ENCODE measurements at regions of chr3 and their contacts with region 1.

Region 1: GRCh38 chr3:180912304-180913296 is at the start of gene FXR1:
- DNase-seq: peak; percentile 80 to 91 (median 89)
- ATAC-seq: peak; percentile 95
- H3K4me3 ChIP-seq: peak within 1 kb of the TSS; percentile 80
- H3K4me3 Mint-ChIP-seq: peak within 1 kb of the TSS; percentile 91 to 98 (median 96)
- H3K27ac ChIP-seq: peak within 1 kb of the TSS; percentile 97
- H3K27ac Mint-ChIP-seq: peak within 1 kb of the TSS; percentile 94 to 100 (median 97)
- H3K4me1 ChIP-seq: peaks cover 17 to 25% of the 10 kb centered on the region in 2 donors
- H3K4me1 Mint-ChIP-seq: peaks cover 35 to 76% (median 67%) of the 10 kb centered on the region in 7 donors
- H3K27me3 ChIP-seq: no peaks in the 10 kb centered on the region
- H3K27me3 Mint-ChIP-seq: no peaks in the 10 kb centered on the region
- total RNA-seq, gene FXR1: 108 to 151 (median 129) TPM

Region 2: GRCh38 chr3:179071550-179072397 is 1840.8 kb before region 1 on chr3 and contains the start of gene ZMAT3:
- CTCF ChIA-PET with region 1: no interaction called
- POLR2A ChIA-PET with region 1: no interaction called
- intact Hi-C with region 1: loop called in 1 of 2 experiments (anchors 5 kb)
- DNase-seq: peak; percentile 72 to 88 (median 83)
- ATAC-seq: peak; percentile 88
- H3K4me3 ChIP-seq: peak within 1 kb of the TSS; percentile 74
- H3K4me3 Mint-ChIP-seq: peak within 1 kb of the TSS; percentile 97 to 100 (median 98)
- H3K27ac ChIP-seq: peak within 1 kb of the TSS; percentile 87
- H3K27ac Mint-ChIP-seq: peak within 1 kb of the TSS; percentile 89 to 98 (median 95)
- H3K4me1 ChIP-seq: peaks cover 13 to 18% of the 10 kb centered on the region in 2 donors
- H3K4me1 Mint-ChIP-seq: peaks cover 24 to 81% (median 59%) of the 10 kb centered on the region in 7 donors
- H3K27me3 ChIP-seq: no peaks in the 10 kb centered on the region
- H3K27me3 Mint-ChIP-seq: no peaks in the 10 kb centered on the region
- total RNA-seq, gene ZMAT3: 20.6 to 23.7 (median 21.7) TPM

Region 3: GRCh38 chr3:179604321-179605078 is 1308.1 kb before region 1 on chr3 and contains the starts of genes MRPL47 and NDUFB5:
- CTCF ChIA-PET with region 1: no interaction called
- POLR2A ChIA-PET with region 1: no interaction called
- intact Hi-C with region 1: loop called (anchors 1 kb)
- DNase-seq: peak; percentile 76 to 95 (median 92)
- ATAC-seq: peak; percentile 100
- H3K4me3 ChIP-seq: peak within 1 kb of the TSS; percentile 95
- H3K4me3 Mint-ChIP-seq: peak within 1 kb of the TSS; percentile 95 to 99 (median 99)
- H3K27ac ChIP-seq: peak within 1 kb of the TSS; percentile 90
- H3K27ac Mint-ChIP-seq: peak within 1 kb of the TSS; percentile 98 to 100 (median 99)
- H3K4me1 ChIP-seq: peaks cover 15 to 25% of the 10 kb centered on the region in 2 donors
- H3K4me1 Mint-ChIP-seq: peaks cover 23 to 65% (median 46%) of the 10 kb centered on the region in 7 donors
- H3K27me3 ChIP-seq: no peaks in the 10 kb centered on the region
- H3K27me3 Mint-ChIP-seq: no peaks in the 10 kb centered on the region
- total RNA-seq, gene MRPL47: 14.4 to 41.4 (median 18.5) TPM
- total RNA-seq, gene NDUFB5: 33.4 to 80.2 (median 62.8) TPM

Region 4: GRCh38 chr3:180523040-180523439 is 389.6 kb before region 1 on chr3:
- CTCF ChIA-PET with region 1: no interaction called
- POLR2A ChIA-PET with region 1: no interaction called
- intact Hi-C with region 1: no loop called
- DNase-seq: no peak
- ATAC-seq: no peak
- H3K4me3 ChIP-seq: no peak overlapping the region
- H3K4me3 Mint-ChIP-seq: no peak overlapping the region
- H3K27ac ChIP-seq: no peak overlapping the region
- H3K27ac Mint-ChIP-seq: no peak overlapping the region
- H3K4me1 ChIP-seq: no peaks in the 10 kb centered on the region
- H3K4me1 Mint-ChIP-seq: no peaks in the 10 kb centered on the region
- H3K27me3 ChIP-seq: no peaks in the 10 kb centered on the region
- H3K27me3 Mint-ChIP-seq: peaks cover 0 to 27% (median 0%) of the 10 kb centered on the region in 5 donors

Region 5: DNA sequence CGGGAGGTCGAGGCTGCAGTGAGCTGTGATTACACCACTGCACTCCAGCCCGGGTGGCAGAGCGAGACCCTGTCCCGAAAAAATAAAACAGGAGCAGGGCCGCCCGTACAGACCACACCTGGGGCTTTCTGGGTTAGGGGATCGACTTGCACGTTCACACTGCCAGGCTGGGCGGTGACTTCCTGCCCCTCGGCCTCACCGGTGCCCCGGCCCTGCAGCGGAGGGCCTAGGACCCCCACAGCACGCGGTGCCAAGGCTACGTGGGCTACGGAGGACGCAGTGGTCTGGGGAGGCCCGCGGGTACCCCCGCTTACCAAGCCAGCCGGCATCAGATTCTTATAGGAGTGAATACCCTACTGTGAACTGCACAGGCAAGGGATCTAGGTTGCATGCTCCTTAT is 322.2 kb before region 1 on chr3:
- CTCF ChIA-PET with region 1: no interaction called
- POLR2A ChIA-PET with region 1: no interaction called
- intact Hi-C with region 1: no loop called
- DNase-seq: no peak
- ATAC-seq: no peak
- H3K4me3 ChIP-seq: no peak overlapping the region
- H3K4me3 Mint-ChIP-seq: no peak overlapping the region
- H3K27ac ChIP-seq: no peak overlapping the region
- H3K27ac Mint-ChIP-seq: no peak overlapping the region
- H3K4me1 ChIP-seq: no peaks in the 10 kb centered on the region
- H3K4me1 Mint-ChIP-seq: no peaks in the 10 kb centered on the region
- H3K27me3 ChIP-seq: no peaks in the 10 kb centered on the region
- H3K27me3 Mint-ChIP-seq: peaks cover 12 to 64% (median 54%) of the 10 kb centered on the region in 5 donors

Region 6: GRCh38 chr3:180601688-180602666 is 310.6 kb before region 1 on chr3 and contains the start of gene TTC14:
- CTCF ChIA-PET with region 1: no interaction called
- POLR2A ChIA-PET with region 1: interaction called, 27 read pairs
- intact Hi-C with region 1: loop called (anchors 1 kb)
- DNase-seq: peak; percentile 80 to 94 (median 92)
- ATAC-seq: peak; percentile 94
- H3K4me3 ChIP-seq: peak within 1 kb of the TSS; percentile 92
- H3K4me3 Mint-ChIP-seq: peak within 1 kb of the TSS; percentile 88 to 98 (median 96)
- H3K27ac ChIP-seq: peak within 1 kb of the TSS; percentile 88
- H3K27ac Mint-ChIP-seq: peak within 1 kb of the TSS; percentile 92 to 99 (median 97)
- H3K4me1 ChIP-seq: peaks cover 12% of the 10 kb centered on the region in 2 donors
- H3K4me1 Mint-ChIP-seq: peaks cover 14 to 47% (median 39%) of the 10 kb centered on the region in 7 donors
- H3K27me3 ChIP-seq: no peaks in the 10 kb centered on the region
- H3K27me3 Mint-ChIP-seq: peaks cover 4 to 23% (median 18%) of the 10 kb centered on the region in 5 donors
- total RNA-seq, gene TTC14: 76.5 to 201 (median 103) TPM

Region 7: DNA sequence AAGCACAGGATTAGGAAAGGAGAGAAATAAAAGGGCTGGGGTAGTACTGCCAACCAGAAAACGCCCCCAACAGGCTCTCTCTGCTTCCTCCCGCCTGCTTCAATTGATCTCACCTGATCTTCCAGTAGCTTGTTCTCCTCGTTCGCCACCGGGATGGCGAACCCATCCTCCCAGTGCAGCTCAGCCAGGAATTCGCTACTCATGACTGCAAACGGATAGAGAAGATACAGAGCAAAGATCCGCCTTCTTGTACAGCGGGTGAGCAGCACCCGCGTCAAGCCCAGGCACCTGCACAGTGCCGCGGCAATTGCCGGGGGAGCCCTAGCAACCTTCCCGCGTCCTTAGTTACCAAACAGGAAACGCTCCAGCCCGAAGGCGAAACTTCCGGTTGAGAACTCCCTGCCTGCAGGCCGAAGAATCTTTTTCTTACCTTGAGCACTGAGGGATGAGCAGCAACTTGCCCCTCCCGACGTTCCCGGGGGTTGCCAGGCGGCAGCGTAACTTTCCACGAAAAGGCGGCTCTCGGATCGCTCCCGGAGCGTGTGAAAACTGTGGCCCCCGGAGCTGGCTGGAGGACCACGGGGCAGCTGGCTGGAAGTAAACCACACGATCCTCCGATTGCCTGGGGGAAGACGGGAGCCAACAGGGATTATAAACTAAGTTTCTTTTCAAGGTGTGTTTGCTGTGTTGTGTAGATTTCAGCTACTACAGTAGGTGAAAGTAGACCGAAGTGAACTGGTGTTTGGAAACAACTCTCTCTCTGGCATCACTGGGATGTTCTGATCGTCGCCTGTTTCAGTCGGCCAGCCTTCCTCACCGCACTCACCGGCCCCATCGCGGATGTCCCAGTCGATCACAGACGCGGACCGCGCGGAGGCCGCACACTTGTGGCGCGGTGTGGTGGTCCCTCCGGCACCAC is 233.2 kb before region 1 on chr3 and contains the start of gene CCDC39:
- CTCF ChIA-PET with region 1: no interaction called
- POLR2A ChIA-PET with region 1: no interaction called
- intact Hi-C with region 1: loop called in 1 of 2 experiments (anchors 5 kb)
- DNase-seq: peak; percentile 12 to 62 (median 47)
- ATAC-seq: peak; percentile 80
- H3K4me3 ChIP-seq: peak within 1 kb of the TSS; percentile 72
- H3K4me3 Mint-ChIP-seq: peak within 1 kb of the TSS; percentile 84 to 94 (median 89)
- H3K27ac ChIP-seq: peak within 1 kb of the TSS; percentile 49
- H3K27ac Mint-ChIP-seq: peak within 1 kb of the TSS in 8 of 9 donors; percentile 21 to 80 (median 68)
- H3K4me1 ChIP-seq: peaks cover 9 to 12% of the 10 kb centered on the region in 2 donors
- H3K4me1 Mint-ChIP-seq: peaks cover 14 to 25% (median 18%) of the 10 kb centered on the region in 7 donors
- H3K27me3 ChIP-seq: peaks cover 0 to 3% of the 10 kb centered on the region in 2 donors
- H3K27me3 Mint-ChIP-seq: peaks cover 45 to 66% (median 57%) of the 10 kb centered on the region in 5 donors
- total RNA-seq, gene CCDC39: not detected

Region 8: DNA sequence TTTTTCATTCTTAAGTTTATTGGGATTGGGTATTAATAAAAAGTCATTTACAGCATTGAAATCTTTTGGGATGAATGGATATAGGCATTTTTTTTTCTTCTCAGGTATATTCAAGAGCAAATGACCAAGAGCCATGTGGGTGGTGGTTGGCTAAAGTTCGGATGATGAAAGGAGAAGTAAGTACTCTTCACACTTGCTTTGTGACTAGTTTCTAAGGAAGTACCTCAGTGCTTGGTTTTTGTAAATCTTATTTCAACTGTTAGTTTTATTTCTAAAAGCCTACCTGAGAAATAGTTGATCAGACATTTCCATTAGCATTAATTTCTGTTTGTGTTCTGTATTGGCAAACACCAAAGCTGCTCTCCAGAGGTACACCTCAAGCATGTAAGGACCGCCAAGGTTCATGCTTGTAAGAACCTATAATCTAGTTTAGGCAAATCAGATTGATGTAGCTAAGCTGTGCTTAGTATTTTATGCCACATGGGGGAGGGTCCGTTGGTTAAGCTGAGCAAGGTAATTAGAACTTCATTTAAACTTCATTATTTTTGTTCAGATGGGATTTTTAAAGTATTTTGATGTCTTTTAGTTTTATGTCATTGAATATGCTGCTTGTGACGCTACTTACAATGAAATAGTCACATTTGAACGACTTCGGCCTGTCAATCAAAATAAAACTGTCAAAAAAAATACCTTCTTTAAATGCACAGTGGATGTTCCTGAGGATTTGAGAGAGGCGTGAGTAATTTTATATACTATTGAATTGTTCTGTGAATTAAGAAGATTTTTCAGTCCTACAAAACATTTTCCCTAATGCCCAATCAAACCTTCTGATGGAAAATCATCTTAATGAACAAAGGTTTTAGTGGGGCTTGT is 35.4 kb after region 1 on chr3:
- CTCF ChIA-PET with region 1: interaction called, 3 read pairs
- POLR2A ChIA-PET with region 1: interaction called, 4 read pairs
- intact Hi-C with region 1: loop called in 1 of 2 experiments (anchors 5 kb)
- DNase-seq: no peak
- ATAC-seq: no peak
- H3K4me3 ChIP-seq: no peak overlapping the region
- H3K4me3 Mint-ChIP-seq: no peak overlapping the region
- H3K27ac ChIP-seq: no peak overlapping the region
- H3K27ac Mint-ChIP-seq: peak overlapping the region in 2 of 9 donors; percentile 32 to 49
- H3K4me1 ChIP-seq: no peaks in the 10 kb centered on the region
- H3K4me1 Mint-ChIP-seq: peaks cover 6 to 30% (median 16%) of the 10 kb centered on the region in 7 donors
- H3K27me3 ChIP-seq: no peaks in the 10 kb centered on the region
- H3K27me3 Mint-ChIP-seq: no peaks in the 10 kb centered on the region

Region 9: DNA sequence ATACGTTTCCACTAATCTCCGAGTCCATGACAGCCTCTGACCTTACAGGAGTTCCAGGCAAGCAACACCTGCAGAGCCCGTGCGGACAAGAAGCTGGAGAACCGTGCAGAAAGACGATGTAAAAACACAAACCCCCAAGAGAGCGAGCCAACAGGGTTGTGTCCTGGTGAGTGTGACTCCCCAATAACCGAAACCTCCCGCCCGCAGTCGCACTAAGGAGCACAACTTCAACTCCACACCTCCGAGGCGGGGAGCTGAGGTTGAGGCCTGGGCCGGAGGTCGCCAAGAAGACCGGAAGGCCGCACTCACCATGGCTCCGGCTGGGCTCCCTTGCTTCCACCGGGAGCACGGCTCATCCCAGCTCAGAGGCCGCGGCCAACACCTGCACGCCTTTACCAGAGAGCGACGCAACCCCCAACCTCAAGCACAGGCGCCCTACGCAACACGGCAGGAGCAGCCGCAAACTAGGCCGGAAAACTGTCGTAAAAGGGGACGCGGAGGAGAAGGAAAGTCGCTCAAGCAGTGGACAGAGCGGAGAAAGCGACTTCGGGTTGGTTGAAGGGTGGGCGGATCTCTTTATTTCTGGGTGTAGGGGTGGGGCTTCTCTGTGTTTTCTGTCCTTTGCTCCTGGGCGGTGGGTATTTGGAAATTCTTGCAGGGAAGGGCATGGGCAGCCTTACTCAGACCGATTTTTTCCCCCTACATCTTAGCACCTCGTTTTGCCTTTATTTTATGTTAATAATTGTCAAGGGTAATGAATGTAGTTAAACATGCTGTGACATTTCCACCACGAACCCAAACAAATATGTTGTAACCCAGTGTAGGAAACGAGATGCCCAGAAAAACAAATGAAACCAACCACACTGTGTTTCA is 76.9 kb after region 1 on chr3 and contains the start of gene DNAJC19:
- CTCF ChIA-PET with region 1: interaction called, 3 read pairs
- POLR2A ChIA-PET with region 1: interaction called, 42 read pairs
- intact Hi-C with region 1: loop called (anchors 1 kb)
- DNase-seq: peak; percentile 69 to 94 (median 93)
- ATAC-seq: peak; percentile 99
- H3K4me3 ChIP-seq: peak within 1 kb of the TSS; percentile 78
- H3K4me3 Mint-ChIP-seq: peak within 1 kb of the TSS; percentile 91 to 99 (median 97)
- H3K27ac ChIP-seq: peak within 1 kb of the TSS; percentile 80
- H3K27ac Mint-ChIP-seq: peak within 1 kb of the TSS; percentile 90 to 99 (median 96)
- H3K4me1 ChIP-seq: peaks cover 15 to 23% of the 10 kb centered on the region in 2 donors
- H3K4me1 Mint-ChIP-seq: peaks cover 15 to 58% (median 44%) of the 10 kb centered on the region in 7 donors
- H3K27me3 ChIP-seq: no peaks in the 10 kb centered on the region
- H3K27me3 Mint-ChIP-seq: peaks cover 0 to 7% (median 0%) of the 10 kb centered on the region in 5 donors
- total RNA-seq, gene DNAJC19: 20.7 to 74.1 (median 40.2) TPM

Region 10: DNA sequence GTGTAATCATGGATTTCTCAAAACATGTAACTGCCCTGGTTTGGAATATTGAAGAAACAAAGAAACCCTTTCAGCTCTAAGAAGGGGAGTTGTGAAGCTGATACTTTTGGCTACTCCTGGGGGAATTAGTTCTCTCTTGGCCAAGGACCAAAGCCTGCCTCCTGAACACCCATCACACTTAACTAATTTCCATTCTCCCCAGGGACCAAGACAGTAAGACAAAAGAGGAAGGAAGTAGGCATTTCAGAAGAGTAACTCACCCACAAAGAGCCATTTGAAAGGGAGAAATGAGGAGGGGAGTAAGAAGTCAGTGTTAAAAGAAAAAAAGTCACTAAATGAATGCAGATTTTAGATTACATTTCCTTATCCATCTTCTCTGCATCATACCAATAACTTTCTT is 471.2 kb after region 1 on chr3:
- CTCF ChIA-PET with region 1: no interaction called
- POLR2A ChIA-PET with region 1: no interaction called
- intact Hi-C with region 1: no loop called
- DNase-seq: no peak
- ATAC-seq: no peak
- H3K4me3 ChIP-seq: no peak overlapping the region
- H3K4me3 Mint-ChIP-seq: no peak overlapping the region
- H3K27ac ChIP-seq: no peak overlapping the region
- H3K27ac Mint-ChIP-seq: no peak overlapping the region
- H3K4me1 ChIP-seq: no peaks in the 10 kb centered on the region
- H3K4me1 Mint-ChIP-seq: no peaks in the 10 kb centered on the region
- H3K27me3 ChIP-seq: no peaks in the 10 kb centered on the region
- H3K27me3 Mint-ChIP-seq: no peaks in the 10 kb centered on the region

Measured in naive thymus-derived CD4-positive, alpha-beta T cell (primary cell).